ENCODE measurements at regions of chr2 and their contacts with region 1.

Region 1: DNA sequence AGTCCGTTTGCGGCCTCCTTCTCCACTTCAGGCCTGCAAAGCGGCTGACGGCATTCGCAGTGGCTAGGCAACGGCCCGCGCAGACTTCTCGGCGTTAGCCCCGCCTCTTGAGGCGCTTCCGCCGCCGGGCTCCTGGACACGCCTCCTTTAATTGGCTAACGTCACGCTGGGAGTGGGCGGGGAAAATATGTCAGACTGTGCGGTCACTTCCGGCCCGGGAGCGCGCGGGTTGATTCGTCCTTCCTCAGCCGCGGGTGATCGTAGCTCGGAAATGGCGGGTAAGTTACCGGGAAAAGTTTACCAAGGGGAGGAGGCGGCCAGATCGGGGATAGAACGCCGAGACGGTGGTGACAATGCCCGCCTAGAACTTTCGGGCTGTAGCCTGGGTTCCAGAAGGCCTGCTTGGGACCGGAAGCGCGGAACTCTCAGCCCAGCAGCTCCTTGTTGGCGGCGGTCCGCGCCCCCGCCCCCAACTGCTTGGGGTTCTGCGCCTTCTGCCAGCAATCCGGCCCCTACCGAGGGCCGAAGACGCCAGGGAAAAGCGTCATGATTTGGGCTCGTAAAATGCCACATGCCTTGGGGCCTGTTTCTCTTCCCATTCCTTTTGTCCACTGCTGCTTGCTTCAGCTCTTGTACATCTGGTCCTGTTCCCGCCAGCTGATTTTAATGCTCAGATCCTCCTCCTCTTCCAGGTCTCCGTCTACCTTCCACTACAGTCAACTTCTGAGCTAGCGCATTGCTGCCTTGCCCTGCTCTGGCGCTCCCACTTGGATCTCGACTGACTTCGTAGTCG is at the start of gene HAT1:
- DNase-seq: peak; percentile 98
- H3K4me3 ChIP-seq: peak within 1 kb of the TSS; percentile 91
- H3K27ac ChIP-seq: peak within 1 kb of the TSS; percentile 69
- H3K4me1 ChIP-seq: peaks cover 23% of the 10 kb centered on the region
- CTCF ChIP-seq: no peak
- total RNA-seq, gene HAT1: 68.6 and 77.5 TPM in 2 replicates

Region 2: DNA sequence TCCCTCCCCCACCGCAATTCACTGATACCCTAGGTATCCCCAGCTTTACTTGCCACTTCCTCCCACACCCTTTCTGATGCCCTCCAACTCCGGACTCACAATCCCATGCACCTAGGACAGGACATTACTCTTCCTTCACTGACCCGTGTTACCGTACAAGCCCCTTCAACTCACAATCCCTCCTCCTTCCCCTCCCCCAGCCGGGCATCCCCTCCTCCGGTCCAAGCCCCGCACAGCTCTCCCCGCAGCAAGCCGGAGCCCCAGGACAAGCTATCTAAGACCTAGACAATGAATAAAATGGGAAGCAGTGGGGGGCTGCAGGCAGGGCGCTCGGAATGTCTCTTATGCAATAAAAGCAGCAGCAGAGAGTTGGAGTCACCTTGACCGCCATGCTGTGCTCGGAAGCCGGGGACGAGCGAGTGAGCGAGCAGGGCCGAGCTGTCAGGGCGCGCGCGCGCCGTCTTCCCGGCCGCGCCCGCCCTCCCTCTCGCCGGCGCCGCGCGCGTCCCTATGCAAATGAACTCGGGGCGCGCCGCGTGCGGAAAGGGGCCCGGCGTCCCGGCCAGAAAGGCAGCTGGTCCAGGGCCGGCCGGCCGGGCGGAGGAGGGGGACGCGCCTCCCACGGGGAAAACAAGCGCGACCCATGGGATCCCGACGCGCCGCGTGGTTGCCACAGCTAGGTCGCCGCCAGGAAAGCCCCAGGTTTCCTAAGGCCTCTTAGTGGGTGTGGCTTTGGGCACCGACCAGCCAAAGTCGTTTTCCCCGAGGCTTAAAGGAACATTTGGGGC is 28.4 kb before region 1 on chr2 and contains the start of gene SLC25A12:
- CTCF ChIA-PET with region 1: interaction called, 4 read pairs
- POLR2A ChIA-PET with region 1: interaction called, 24 read pairs
- intact Hi-C with region 1: loop called (anchors 2 kb)
- DNase-seq: peak; percentile 92
- H3K4me3 ChIP-seq: peak within 1 kb of the TSS; percentile 86
- H3K27ac ChIP-seq: peak within 1 kb of the TSS; percentile 39
- H3K4me1 ChIP-seq: peaks cover 17% of the 10 kb centered on the region
- CTCF ChIP-seq: no peak
- total RNA-seq, gene SLC25A12: 21.0 and 28.1 TPM in 2 replicates

Region 3: GRCh38 chr2:171939743-171940071 is 17.3 kb after region 1 on chr2:
- CTCF ChIA-PET with region 1: interaction called, 3 read pairs
- POLR2A ChIA-PET with region 1: interaction called, 16 read pairs
- intact Hi-C with region 1: no loop called
- DNase-seq: no peak
- H3K4me3 ChIP-seq: no peak overlapping the region
- H3K27ac ChIP-seq: no peak overlapping the region
- H3K4me1 ChIP-seq: no peaks in the 10 kb centered on the region
- CTCF ChIP-seq: no peak